Activated CD8-positive, alpha-beta T cell treated with anti-CD3 and anti-CD28 coated beads for 36 hours (primary cell): ENCODE measurements at regions of chr12 and their contacts with region 1.

Region 1: DNA sequence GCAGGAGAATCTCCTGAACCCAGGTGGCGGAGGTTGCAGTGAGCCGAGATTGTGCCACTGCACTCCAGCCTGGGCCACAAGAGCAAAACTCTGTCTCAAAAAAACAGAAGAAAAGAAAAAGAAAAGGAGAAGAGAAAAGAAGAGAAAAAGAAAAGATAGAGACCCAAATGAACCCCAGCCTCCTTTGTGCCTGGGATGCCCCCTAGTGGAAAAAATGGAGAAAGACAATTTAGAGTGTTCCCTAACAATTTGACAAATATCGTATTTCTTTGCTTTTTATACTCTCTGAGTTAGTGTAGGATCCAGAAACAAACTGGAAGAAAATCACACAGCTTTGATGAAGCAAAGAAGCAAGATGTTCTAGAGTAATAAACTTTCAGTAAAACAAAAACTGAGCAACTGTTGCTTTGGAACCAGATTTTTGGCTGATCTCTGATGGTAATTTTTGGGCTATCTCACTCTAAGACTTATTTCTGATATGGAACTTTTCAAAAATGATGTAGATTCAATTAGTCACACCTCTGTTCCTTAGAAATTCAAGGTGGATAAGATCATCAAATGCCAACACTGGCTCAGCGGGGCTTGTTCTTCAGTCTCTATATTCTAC is 18.6 kb upstream of the PRKAB1 start:
- DNase-seq: no peak
- ATAC-seq: no peak
- H3K4me3 Mint-ChIP-seq: no peak overlapping the region
- H3K27ac Mint-ChIP-seq: no peak overlapping the region
- H3K4me1 Mint-ChIP-seq: peaks cover 3% of the 10 kb centered on the region
- H3K27me3 Mint-ChIP-seq: no peaks in the 10 kb centered on the region
- CTCF ChIP-seq: peak; percentile 88

Region 2: DNA sequence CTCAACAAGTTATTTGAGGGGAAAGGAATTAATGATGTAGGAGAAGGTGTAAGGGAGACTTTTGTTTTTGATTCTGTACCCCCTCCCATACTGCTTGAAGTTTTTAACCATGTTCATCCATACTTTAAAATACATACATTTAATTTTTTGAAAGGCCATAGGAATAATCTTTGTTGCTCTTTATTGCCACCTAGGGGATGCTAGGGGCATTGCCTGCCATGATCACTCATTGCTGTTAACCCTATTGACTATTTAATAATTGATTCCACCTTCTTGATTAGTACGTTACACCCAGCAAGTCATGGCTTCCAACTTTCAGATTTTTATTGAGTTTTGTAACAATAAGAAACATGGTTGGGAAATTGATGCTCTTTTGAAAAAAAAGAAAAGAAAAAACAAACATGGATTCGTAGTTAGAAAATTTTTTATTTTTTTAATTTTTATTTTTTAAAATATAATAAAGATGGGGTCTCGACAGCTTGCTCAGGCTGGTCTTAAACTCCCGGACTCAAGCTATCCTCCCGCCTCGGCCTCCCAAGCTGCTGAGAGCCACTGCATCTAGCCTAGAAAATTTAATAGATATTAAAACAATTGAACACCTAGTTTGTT is 10.1 kb after region 1 on chr12:
- CTCF ChIA-PET with region 1: interaction called, 16 read pairs
- POLR2A ChIA-PET with region 1: no interaction called
- intact Hi-C with region 1: no loop called
- DNase-seq: peak; percentile 61
- ATAC-seq: peak; percentile 74
- H3K4me3 Mint-ChIP-seq: no peak overlapping the region
- H3K27ac Mint-ChIP-seq: no peak overlapping the region
- H3K4me1 Mint-ChIP-seq: no peaks in the 10 kb centered on the region
- H3K27me3 Mint-ChIP-seq: no peaks in the 10 kb centered on the region
- CTCF ChIP-seq: peak; percentile 92

Region 3: GRCh38 chr12:119666900-119667576 is 17.7 kb after region 1 on chr12:
- CTCF ChIA-PET with region 1: interaction called, 11 read pairs
- POLR2A ChIA-PET with region 1: no interaction called
- intact Hi-C with region 1: no loop called
- DNase-seq: no peak
- ATAC-seq: no peak
- H3K4me3 Mint-ChIP-seq: peak overlapping the region; percentile 92
- H3K27ac Mint-ChIP-seq: peak overlapping the region; percentile 74
- H3K4me1 Mint-ChIP-seq: peaks cover 40% of the 10 kb centered on the region
- H3K27me3 Mint-ChIP-seq: no peaks in the 10 kb centered on the region
- CTCF ChIP-seq: no peak

Region 4: DNA sequence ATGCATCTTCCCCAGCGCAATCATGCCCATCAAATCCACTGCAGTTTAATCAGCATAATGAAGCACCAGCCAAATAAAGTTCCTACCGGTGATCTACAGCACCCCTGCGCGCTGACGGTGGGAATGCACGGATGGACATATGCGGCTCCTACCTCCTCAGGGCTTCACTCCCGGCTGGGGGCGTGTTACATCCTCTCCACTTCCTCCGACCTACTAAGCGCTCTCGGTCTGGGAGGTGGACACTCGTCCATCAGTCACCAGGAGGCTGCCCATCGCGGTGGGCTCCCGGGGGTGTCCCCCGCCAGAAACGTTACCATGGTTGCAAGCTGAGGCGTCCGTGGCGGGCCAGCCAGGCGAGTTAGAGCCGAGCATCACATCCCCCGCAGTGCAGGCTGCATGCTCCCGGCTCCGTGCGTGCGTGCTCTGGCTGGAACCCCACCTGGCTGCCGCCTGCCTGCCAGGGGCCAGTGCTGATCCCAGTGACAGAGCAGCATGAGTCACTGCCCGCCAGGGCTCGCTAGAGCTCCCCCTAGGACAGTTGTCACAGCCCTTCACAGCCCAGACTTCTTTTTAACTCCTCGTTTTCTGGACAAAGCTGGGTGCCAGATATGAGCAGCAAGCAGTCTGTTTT is 154.8 kb after region 1 on chr12:
- CTCF ChIA-PET with region 1: no interaction called
- POLR2A ChIA-PET with region 1: no interaction called
- intact Hi-C with region 1: no loop called
- DNase-seq: peak; percentile 6
- ATAC-seq: peak; percentile 55
- H3K4me3 Mint-ChIP-seq: no peak overlapping the region
- H3K27ac Mint-ChIP-seq: no peak overlapping the region
- H3K4me1 Mint-ChIP-seq: peaks cover 5% of the 10 kb centered on the region
- H3K27me3 Mint-ChIP-seq: no peaks in the 10 kb centered on the region
- CTCF ChIP-seq: no peak